Activated CD4-positive, alpha-beta T cell treated with anti-CD3 and anti-CD28 coated beads, Interleukin-2, amount 10 ng/mL, durations not matched to agents 24 days and 14 days (primary cell): ENCODE measurements at regions of chr19 and their contacts with region 1.

Region 1: GRCh38 chr19:38544034-38544958 is 73.5 kb downstream of the MAP4K1 start:
- DNase-seq: peak; percentile 82
- H3K4me3 Mint-ChIP-seq: peak overlapping the region; percentile 71
- H3K27ac Mint-ChIP-seq: peak overlapping the region; percentile 65
- H3K4me1 Mint-ChIP-seq: peaks cover 27% of the 10 kb centered on the region
- H3K27me3 Mint-ChIP-seq: no peaks in the 10 kb centered on the region

Region 2: DNA sequence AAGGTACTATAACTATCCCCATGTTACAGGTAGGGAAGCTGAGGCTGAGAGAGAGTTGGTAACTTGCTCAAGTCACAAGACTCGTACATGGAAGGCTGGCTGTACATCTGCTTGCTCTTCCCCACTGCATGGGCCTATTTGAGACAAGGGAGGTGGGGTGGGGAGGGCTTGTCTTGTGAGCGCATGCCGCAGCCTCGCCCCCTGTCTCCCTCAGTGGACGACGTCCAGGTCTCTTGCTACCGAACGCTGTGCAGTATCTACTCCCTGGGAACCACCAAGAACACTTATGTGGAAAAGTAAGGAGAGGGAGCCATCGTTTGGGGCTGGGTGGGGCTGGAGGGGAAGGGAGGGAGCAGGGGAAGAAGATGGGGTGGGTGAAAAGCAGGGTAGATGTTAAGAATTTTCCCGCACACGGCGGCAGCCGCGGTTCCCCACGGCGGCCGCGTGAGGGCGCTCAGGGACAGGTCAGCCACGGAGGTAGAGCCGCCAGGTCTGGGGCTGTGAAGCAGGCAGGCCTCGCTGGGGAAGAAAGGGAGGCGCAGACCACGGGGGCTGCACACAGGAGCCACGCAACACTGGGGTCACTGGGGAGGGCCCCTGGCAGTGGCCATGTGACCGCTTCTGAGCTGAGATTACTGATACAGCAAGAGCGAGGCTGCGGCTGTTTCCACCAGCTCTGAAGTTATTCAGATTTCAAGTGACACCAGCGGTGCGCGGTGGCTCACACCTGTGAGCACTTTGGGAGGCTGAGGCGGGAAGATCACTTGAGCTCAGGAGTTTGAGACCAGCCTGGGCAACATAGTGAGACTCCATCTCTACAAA is 29.3 kb before region 1 on chr19:
- intact Hi-C with region 1: loop called (anchors 2 kb)
- DNase-seq: peak; percentile 94
- H3K4me3 Mint-ChIP-seq: peak overlapping the region; percentile 26
- H3K27ac Mint-ChIP-seq: no peak overlapping the region
- H3K4me1 Mint-ChIP-seq: peaks cover 22% of the 10 kb centered on the region
- H3K27me3 Mint-ChIP-seq: peaks cover 7% of the 10 kb centered on the region

Region 3: DNA sequence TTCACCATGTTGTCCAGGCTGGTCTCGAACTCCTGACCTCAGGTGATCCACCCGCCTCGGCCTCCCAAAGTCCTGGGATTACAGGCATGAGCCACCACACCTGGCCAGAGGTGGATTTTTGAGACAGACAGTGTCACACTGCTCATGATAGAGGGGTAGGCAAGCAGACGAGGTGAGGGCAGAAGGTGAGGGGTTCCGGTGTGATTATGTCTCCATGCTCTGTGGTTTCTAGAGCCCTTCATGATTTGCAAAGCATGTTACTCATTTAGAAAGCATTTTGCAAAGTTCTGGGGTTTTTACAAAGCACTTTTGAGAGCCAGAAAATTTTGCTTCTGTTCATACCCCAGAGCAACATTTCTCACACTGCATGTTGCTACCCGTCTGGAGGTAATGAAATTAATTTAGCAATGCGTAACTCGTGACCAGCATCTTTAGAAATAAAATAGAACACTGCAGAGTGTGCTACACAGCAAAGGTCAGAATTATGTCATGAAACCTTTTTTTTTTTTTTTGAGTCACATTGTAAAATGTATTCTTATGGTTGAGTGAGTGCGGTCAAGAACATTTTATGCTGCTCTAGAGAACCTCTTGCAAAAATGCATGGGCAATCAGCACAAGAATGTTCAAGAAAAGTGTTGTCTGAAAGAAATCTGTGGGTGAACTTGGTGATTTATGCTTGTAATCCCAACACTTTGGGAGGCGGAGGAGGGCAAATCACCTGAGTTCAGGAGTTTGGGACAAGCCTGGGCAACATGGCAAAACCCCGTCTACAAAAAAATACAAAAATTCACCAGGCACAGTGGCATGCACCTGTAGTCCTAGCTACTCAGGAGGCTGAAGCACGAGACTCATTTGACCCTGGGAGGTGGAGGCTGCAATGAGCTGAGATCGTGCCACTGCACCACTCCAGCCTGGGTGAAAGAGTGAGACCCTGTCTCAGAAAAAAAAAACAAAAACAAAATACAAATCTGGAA is 15.4 kb after region 1 on chr19:
- intact Hi-C with region 1: loop called (anchors 1 kb)
- DNase-seq: peak; percentile 78
- H3K4me3 Mint-ChIP-seq: peak overlapping the region; percentile 65
- H3K27ac Mint-ChIP-seq: peak overlapping the region; percentile 76
- H3K4me1 Mint-ChIP-seq: peaks cover 38% of the 10 kb centered on the region
- H3K27me3 Mint-ChIP-seq: peaks cover 23% of the 10 kb centered on the region

Region 4: DNA sequence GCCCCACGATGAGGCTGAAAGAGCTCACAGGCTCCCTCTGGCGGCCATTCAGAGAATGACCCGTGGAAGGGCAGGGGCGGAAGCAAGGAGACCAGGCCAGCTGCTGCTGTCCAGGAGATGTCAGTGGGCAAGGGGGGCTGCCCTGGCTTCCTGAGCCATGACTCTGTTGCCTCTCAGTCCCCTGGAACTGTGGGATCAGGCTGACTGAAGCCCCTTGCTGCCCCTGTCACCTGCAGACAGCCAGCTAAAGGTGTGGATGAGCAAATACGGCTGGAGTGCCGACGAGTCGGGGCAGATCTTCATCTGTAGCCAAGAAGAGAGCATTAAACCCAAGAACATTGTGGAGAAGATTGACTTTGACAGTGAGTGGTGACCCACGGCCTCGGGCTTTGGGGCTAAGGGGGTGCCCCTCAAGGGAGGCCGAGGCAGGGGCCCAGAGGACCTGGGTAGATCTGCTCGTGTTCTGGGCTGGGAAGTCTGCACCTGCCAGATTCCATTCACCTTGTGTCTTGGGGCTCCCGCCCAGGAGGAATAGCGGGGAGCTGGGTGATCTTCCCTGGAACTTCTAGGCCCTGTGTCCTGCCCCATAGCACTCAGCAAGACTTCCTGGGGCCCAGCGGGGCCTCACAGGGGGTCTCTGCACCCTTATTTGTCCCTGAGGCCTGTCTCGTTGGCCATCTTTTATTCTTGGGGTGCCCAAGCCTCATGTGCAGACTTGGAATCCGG is 90.6 kb after region 1 on chr19:
- intact Hi-C with region 1: loop called (anchors 1 kb)
- DNase-seq: peak; percentile 94
- H3K4me3 Mint-ChIP-seq: peak overlapping the region; percentile 55
- H3K27ac Mint-ChIP-seq: peak overlapping the region; percentile 71
- H3K4me1 Mint-ChIP-seq: peaks cover 26% of the 10 kb centered on the region
- H3K27me3 Mint-ChIP-seq: no peaks in the 10 kb centered on the region

Region 5: GRCh38 chr19:38949580-38950367 is 405.5 kb after region 1 on chr19:
- intact Hi-C with region 1: no loop called
- DNase-seq: peak; percentile 93
- H3K4me3 Mint-ChIP-seq: peak overlapping the region; percentile 68
- H3K27ac Mint-ChIP-seq: no peak overlapping the region
- H3K4me1 Mint-ChIP-seq: peaks cover 17% of the 10 kb centered on the region
- H3K27me3 Mint-ChIP-seq: peaks cover 20% of the 10 kb centered on the region